GM12878 (cell line): ENCODE measurements at regions of chr1 and their contacts with region 1.

Region 1: GRCh38 chr1:175035865-175036264 is 12.6 kb upstream of the MRPS14 start:
- DNase-seq: no peak
- ATAC-seq: no peak
- H3K4me3 ChIP-seq: no peak overlapping the region
- H3K27ac ChIP-seq: no peak overlapping the region
- H3K4me1 ChIP-seq: no peaks in the 10 kb centered on the region
- H3K27me3 ChIP-seq: peaks cover 0 to 3% of the 10 kb centered on the region in 2 experiments; a peak in 2 of 4 replicates
- CTCF ChIP-seq: no peak
- EP300 ChIP-seq: no peak
- POLR2A ChIP-seq: no peak
- RAD21 ChIP-seq: no peak

Region 2: GRCh38 chr1:175015243-175015642 is 20.6 kb before region 1 on chr1:
- CTCF ChIA-PET with region 1: no interaction called
- POLR2A ChIA-PET with region 1: no interaction called
- RAD21 ChIA-PET with region 1: no interaction called
- SMC1A ChIA-PET with region 1: no interaction called
- in situ Hi-C with region 1: no loop called
- intact Hi-C with region 1: no loop called
- DNase-seq: no peak
- ATAC-seq: no peak
- H3K4me3 ChIP-seq: no peak overlapping the region
- H3K27ac ChIP-seq: no peak overlapping the region
- H3K4me1 ChIP-seq: no peaks in the 10 kb centered on the region
- H3K27me3 ChIP-seq: no peaks in the 10 kb centered on the region
- CTCF ChIP-seq: no peak
- EP300 ChIP-seq: no peak
- POLR2A ChIP-seq: no peak
- RAD21 ChIP-seq: no peak

Region 3: DNA sequence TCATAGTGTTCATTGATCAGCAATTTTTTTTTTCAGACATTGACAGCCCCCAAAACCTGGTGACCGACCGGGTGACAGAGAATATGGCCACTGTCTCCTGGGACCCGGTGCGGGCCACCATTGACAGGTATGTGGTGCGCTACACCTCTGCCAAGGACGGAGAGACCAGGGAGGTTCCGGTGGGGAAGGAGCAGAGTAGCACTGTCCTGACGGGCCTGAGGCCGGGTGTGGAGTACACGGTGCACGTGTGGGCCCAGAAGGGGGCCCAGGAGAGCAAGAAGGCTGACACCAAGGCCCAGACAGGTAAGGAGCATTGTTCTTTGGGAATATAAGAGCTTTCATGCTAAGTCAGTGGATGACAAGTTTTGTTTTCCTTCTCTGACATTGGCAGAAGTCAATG is 81.0 kb after region 1 on chr1:
- CTCF ChIA-PET with region 1: interaction called, 18 read pairs
- POLR2A ChIA-PET with region 1: no interaction called
- RAD21 ChIA-PET with region 1: no interaction called
- SMC1A ChIA-PET with region 1: interaction called, 3 read pairs
- in situ Hi-C with region 1: no loop called
- intact Hi-C with region 1: no loop called
- DNase-seq: no peak
- ATAC-seq: no peak
- H3K4me3 ChIP-seq: no peak overlapping the region
- H3K27ac ChIP-seq: no peak overlapping the region
- H3K4me1 ChIP-seq: no peaks in the 10 kb centered on the region; the same call in 1 of the 2 replicates
- H3K27me3 ChIP-seq: no peaks in the 10 kb centered on the region
- CTCF ChIP-seq: no peak
- EP300 ChIP-seq: no peak
- POLR2A ChIP-seq: no peak
- RAD21 ChIP-seq: no peak